Dorsolateral prefrontal cortex (tissue), 120 donors: ENCODE measurements at regions of chr7 and their contacts with region 1.

Region 1: GRCh38 chr7:66493235-66494181 is 135.2 kb upstream of the KCTD7 start:
- DNase-seq: peak; percentile 96 to 100 (median 98)
- H3K4me3 ChIP-seq: peak overlapping the region; percentile 66 to 100 (median 90)
- H3K27ac ChIP-seq: peak overlapping the region; percentile 69 to 99 (median 94)
- H3K27me3 ChIP-seq: no peaks in the 10 kb centered on the region
- CTCF ChIP-seq: peak in 39 of 56 donors; percentile 4 to 59 (median 32)

Region 2: GRCh38 chr7:66204822-66205740 is 288.4 kb before region 1 on chr7 and contains the start of gene TPST1:
- intact Hi-C with region 1: loop called (anchors 5 kb)
- DNase-seq: peak; percentile 89 to 98 (median 95)
- H3K4me3 ChIP-seq: peak within 1 kb of the TSS; percentile 64 to 100 (median 96)
- H3K27ac ChIP-seq: peak within 1 kb of the TSS; percentile 48 to 95 (median 84)
- H3K27me3 ChIP-seq: no peaks in the 10 kb centered on the region
- CTCF ChIP-seq: peak in 54 of 56 donors; percentile 11 to 76 (median 60)
- total RNA-seq, gene TPST1: 24.1 to 80.0 (median 37.7) TPM

Region 3: DNA sequence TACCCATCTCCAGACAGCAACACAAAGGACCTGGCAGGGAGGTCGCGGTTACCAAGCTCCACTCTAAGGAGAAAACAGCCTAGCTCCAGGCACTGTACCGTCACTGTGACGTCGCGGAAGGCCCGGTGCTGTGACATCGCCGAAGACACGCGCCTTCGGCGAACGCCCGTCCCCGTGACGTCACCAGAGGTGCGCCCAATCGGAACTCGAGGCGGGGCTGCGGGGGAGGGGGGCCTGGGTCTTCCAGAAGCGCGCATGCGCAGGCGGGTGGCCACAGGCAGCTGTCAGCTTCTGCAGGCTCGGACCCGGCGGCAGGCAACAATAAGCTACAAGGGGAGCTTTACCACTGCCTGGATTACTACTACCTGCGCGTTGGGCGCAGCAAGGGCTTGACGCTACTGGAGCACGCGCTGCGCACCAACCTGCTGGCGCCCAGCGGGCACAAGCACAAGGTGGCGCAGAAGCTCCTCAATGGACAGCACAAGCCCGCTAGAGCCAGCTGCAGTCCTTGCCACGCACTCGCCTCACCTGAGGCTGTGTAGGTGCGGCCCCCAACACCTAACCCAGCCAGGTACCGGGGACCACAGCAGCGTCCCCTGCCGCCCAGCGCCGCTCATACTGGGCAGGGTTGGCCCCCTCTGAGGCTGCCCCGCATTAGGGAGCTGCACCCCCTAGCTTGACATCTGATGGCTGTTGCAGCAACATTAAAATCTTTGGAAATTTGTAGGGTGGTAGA is 80.0 kb before region 1 on chr7:
- intact Hi-C with region 1: loop called (anchors 2 to 5 kb)
- DNase-seq: peak; percentile 79 to 95 (median 88)
- H3K4me3 ChIP-seq: peak overlapping the region; percentile 52 to 96 (median 74)
- H3K27ac ChIP-seq: peak overlapping the region in 58 of 59 donors; percentile 1 to 92 (median 76)
- H3K27me3 ChIP-seq: no peaks in the 10 kb centered on the region
- CTCF ChIP-seq: peak in 53 of 56 donors; percentile 19 to 71 (median 48)